Activated naive CD4-positive, alpha-beta T cell treated with anti-CD3 and anti-CD28 coated beads for 36 hours (primary cell): ENCODE measurements at regions of chr17 and their contacts with region 1.

Region 1: DNA sequence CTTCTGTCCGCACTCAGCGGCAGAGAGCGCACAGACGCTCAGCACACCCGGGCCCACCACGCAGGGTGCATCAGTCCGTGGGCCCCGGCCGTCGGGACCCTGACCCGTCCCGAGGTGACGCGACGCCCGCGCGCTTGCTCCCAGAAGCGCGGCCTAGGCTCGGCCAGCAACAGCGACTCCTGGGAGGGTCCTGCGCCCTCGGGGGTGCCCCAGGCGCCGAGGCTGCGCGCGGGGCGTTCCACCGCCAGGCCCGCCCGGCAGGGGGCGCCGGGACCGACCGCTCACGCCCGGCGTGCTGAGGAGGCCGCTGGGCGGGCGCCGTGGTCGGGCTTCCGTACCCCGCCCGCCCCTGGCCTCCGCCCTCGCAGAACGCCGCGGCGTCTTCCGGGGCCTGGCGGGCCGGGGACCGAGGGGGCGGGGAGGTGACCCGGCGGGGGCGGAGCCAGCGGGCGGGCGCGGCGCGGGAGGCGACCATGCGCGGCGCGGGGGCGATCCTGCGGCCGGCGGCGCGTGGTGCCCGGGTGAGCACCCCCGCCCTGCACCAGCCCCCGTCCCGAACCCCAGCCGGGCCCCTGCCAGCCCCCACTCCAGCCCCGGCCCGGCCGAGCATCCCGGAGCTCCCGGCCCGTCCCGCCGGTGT is at the start of gene CISD3:
- DNase-seq: peak; percentile 84
- H3K4me3 Mint-ChIP-seq: peak within 1 kb of the TSS; percentile 94
- H3K27ac Mint-ChIP-seq: peak within 1 kb of the TSS; percentile 98
- H3K4me1 Mint-ChIP-seq: peaks cover 83% of the 10 kb centered on the region
- H3K27me3 Mint-ChIP-seq: no peaks in the 10 kb centered on the region
- total RNA-seq, gene CISD3: 35.1 to 35.8 TPM

Region 2: DNA sequence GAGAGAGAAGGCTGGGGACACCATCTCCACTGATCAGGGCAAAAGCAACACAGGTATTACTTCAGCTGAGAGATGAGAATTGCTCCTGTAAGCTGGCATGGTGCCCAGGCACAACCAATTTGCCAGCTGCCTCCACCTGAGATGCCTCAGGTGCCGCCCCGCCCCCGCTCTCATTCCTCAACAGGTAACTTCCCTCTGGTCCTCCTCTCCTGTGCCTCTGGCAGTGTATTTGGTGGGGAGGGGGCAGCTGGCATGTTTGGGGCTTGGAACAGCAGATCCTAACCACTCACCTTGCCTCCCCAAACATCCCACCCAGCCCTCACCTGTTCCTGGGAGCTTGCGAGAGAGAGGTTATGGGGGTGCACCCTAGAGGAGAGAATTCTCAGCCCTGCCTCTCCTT is 121.4 kb before region 1 on chr17:
- CTCF ChIA-PET with region 1: no interaction called
- intact Hi-C with region 1: no loop called
- DNase-seq: no peak
- H3K4me3 Mint-ChIP-seq: no peak overlapping the region
- H3K27ac Mint-ChIP-seq: no peak overlapping the region
- H3K4me1 Mint-ChIP-seq: peaks cover 11% of the 10 kb centered on the region
- H3K27me3 Mint-ChIP-seq: peaks cover 59% of the 10 kb centered on the region

Region 3: GRCh38 chr17:38709864-38710603 is 20.0 kb before region 1 on chr17:
- CTCF ChIA-PET with region 1: interaction called, 12 read pairs
- intact Hi-C with region 1: loop called (anchors 1 kb)
- DNase-seq: no peak
- H3K4me3 Mint-ChIP-seq: no peak overlapping the region
- H3K27ac Mint-ChIP-seq: peak overlapping the region; percentile 50
- H3K4me1 Mint-ChIP-seq: peaks cover 59% of the 10 kb centered on the region
- H3K27me3 Mint-ChIP-seq: no peaks in the 10 kb centered on the region